PC-9 (cell line): ENCODE measurements at regions of chr12 and their contacts with region 1.

Region 1: DNA sequence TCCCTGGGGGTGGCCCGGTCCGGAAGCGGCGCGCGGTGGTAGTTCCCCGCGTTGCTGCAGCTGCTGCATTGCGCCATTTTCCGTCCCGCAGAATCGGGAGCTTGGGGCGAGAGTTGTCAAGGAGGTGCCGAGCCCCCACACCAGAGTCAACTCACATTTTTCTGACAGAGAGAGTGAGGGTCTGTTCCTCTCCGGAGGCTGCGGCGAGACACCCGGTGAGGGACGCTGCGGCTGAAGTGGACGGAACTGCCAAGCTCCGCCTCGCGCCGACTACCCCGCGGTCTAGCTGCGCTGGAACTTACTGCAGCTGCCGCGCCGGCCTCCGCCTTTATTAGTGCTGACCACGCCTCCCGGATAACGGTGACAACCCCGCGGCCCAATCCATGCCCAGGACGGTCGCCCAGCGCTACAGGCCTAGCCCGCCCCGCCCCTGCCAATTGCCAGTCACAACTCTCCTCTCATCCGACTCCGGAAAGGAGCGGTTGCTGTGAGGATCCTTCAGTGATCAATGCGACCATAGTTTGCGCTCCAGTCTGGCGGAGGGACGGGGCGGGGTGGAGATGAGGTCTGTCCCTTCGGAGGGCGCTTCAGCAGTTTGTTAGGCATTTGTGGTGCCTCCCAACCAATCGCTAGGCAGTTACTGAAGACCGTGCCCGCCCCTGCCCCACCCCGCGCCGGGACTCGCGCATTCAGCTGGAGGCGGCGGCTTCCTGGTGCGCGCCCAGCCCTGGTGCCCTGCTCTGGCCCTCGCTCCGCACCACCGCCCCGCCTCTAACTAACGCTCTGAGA is at the start of gene VAMP1:
- DNase-seq: peak; percentile 93 to 98
- H3K4me3 ChIP-seq: peak within 1 kb of the TSS; percentile 76
- H3K27ac ChIP-seq: no peak within 1 kb of the TSS
- H3K4me1 ChIP-seq: peaks cover 15% of the 10 kb centered on the region
- H3K27me3 ChIP-seq: 0 out of 2 replicates have a peak, but pooled peaks cover 6% of the 10 kb centered on the region
- CTCF ChIP-seq: no peak
- total RNA-seq, gene VAMP1: 7.7 and 9.1 TPM in 2 replicates

Region 2: DNA sequence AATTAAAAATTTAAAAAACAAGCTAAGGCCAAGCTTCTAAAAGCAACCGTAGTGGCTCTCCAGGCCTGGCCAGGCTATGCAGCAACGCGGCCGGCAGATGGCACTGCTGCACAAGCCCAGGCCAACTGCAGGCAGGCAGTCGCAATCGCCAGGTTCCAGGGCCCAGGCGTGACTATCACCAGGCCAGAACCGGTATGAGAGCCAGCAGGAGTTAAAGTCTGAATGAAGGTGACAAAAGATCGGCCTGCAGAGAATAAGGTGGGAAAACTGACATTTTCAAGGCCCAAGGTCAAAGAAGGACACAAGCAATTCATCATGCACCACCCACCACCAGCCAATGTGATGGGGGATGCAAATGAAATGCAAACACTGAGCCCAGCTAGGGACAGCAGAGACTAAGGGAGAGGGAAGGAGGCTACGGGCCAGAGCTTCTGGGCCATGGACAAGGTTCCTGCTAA is 481.9 kb before region 1 on chr12:
- CTCF ChIA-PET with region 1: interaction called, 3 read pairs
- POLR2A ChIA-PET with region 1: interaction called, 5 read pairs
- intact Hi-C with region 1: loop called (anchors 2 kb)
- DNase-seq: peak; percentile 50 to 86
- H3K4me3 ChIP-seq: no peak overlapping the region
- H3K27ac ChIP-seq: no peak overlapping the region
- H3K4me1 ChIP-seq: no peaks in the 10 kb centered on the region
- H3K27me3 ChIP-seq: peaks cover 35% of the 10 kb centered on the region
- CTCF ChIP-seq: peak; percentile 99

Region 3: GRCh38 chr12:6062757-6063735 is 407.5 kb before region 1 on chr12:
- CTCF ChIA-PET with region 1: no interaction called
- POLR2A ChIA-PET with region 1: no interaction called
- intact Hi-C with region 1: loop called (anchors 2 kb)
- DNase-seq: peak; percentile 48 to 80
- H3K4me3 ChIP-seq: no peak overlapping the region
- H3K27ac ChIP-seq: no peak overlapping the region
- H3K4me1 ChIP-seq: peaks cover 34% of the 10 kb centered on the region
- H3K27me3 ChIP-seq: no peaks in the 10 kb centered on the region
- CTCF ChIP-seq: peak; percentile 98

Region 4: GRCh38 chr12:6215932-6216494 is 254.6 kb before region 1 on chr12:
- CTCF ChIA-PET with region 1: no interaction called
- POLR2A ChIA-PET with region 1: no interaction called
- intact Hi-C with region 1: loop called (anchors 2 kb)
- DNase-seq: peak; percentile 99 to 100
- H3K4me3 ChIP-seq: peak overlapping the region; percentile 32; the same call in 1 of the 2 replicates
- H3K27ac ChIP-seq: peak overlapping the region; percentile 95
- H3K4me1 ChIP-seq: peaks cover 86% of the 10 kb centered on the region
- H3K27me3 ChIP-seq: no peaks in the 10 kb centered on the region
- CTCF ChIP-seq: no peak

Region 5: DNA sequence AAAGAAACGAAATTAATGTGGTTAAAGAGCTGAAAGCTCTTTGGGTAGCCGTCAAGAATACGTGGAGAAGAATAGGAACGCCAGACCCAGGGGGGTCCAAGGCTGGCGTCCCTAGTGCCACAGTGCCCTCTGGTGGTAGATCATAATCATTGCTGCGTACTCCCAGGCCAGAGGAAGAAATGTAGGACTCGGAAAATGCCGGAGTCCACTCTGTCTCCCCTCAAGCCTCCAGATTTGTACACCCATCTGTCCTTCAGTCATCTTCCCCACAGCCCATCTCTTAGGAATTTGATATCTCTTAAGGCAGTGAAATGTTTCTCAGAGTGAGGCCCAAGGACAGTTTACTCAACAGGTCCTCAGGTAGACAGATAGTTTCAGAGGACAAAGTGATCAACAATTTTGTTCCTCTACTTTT is 185.5 kb before region 1 on chr12:
- CTCF ChIA-PET with region 1: interaction called, 4 read pairs
- POLR2A ChIA-PET with region 1: interaction called, 3 read pairs
- intact Hi-C with region 1: loop called (anchors 2 kb)
- DNase-seq: peak; percentile 48 to 79
- H3K4me3 ChIP-seq: no peak overlapping the region
- H3K27ac ChIP-seq: no peak overlapping the region
- H3K4me1 ChIP-seq: peaks cover 40% of the 10 kb centered on the region
- H3K27me3 ChIP-seq: no peaks in the 10 kb centered on the region
- CTCF ChIP-seq: peak; percentile 99

Region 6: GRCh38 chr12:6335451-6336078 is 135.0 kb before region 1 on chr12:
- CTCF ChIA-PET with region 1: interaction called, 3 read pairs
- POLR2A ChIA-PET with region 1: interaction called, 3 read pairs
- intact Hi-C with region 1: loop called (anchors 1 kb)
- DNase-seq: peak; percentile 76
- H3K4me3 ChIP-seq: peak overlapping the region; percentile 49
- H3K27ac ChIP-seq: peak overlapping the region; percentile 95
- H3K4me1 ChIP-seq: peaks cover 82% of the 10 kb centered on the region
- H3K27me3 ChIP-seq: no peaks in the 10 kb centered on the region
- CTCF ChIP-seq: peak; percentile 53; the same call in 1 of the 2 replicates

Region 7: DNA sequence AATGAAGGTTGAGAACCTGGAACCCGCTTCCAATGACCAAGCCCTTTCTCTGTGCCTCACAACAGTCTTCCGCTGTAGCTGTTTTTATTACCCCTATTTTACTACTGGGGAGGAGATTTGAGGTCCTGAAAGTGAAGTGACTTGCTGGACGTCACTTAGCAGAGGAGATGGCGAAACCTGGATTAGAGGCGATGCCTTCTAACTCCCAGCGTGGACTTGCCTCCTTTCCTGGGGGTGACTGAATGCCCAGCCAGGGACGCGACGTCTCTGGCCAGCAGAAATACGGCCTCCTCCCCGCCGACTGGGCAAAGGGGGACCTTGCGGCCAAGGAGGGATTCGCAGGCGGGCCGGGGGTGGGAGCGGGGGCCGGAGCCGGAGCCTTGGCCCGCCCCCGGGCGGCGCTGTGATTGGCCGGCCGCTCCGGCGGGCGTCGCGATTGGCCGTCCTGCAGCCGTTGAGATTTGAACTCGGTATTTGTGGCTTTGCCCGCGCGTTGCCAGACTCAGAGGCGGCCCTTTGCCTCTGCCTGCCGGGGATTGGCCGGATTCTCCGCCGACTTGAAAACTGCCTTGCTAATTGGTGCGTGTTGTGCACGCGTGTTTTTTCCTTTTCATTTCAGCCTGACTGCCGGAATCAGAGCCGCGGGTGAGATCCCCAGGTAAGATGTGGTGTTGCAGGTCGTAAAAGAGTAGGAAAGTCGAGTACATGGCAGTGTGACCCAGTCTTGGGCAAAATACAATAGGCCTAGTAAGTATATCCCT is 23.1 kb after region 1 on chr12 and contains the start of gene NCAPD2:
- CTCF ChIA-PET with region 1: interaction called, 3 read pairs
- POLR2A ChIA-PET with region 1: interaction called, 9 read pairs
- intact Hi-C with region 1: loop called (anchors 1 kb)
- DNase-seq: peak; percentile 93 to 98
- H3K4me3 ChIP-seq: peak within 1 kb of the TSS; percentile 87
- H3K27ac ChIP-seq: peak within 1 kb of the TSS; percentile 85
- H3K4me1 ChIP-seq: peaks cover 24% of the 10 kb centered on the region
- H3K27me3 ChIP-seq: no peaks in the 10 kb centered on the region
- CTCF ChIP-seq: peak; percentile 46; the same call in 1 of the 2 replicates
- total RNA-seq, gene NCAPD2: 220 and 266 TPM in 2 replicates

Region 8: GRCh38 chr12:6507102-6507998 is 36.8 kb after region 1 on chr12:
- CTCF ChIA-PET with region 1: no interaction called
- POLR2A ChIA-PET with region 1: no interaction called
- intact Hi-C with region 1: no loop called
- DNase-seq: no peak
- H3K4me3 ChIP-seq: no peak overlapping the region
- H3K27ac ChIP-seq: no peak overlapping the region
- H3K4me1 ChIP-seq: no peaks in the 10 kb centered on the region
- H3K27me3 ChIP-seq: no peaks in the 10 kb centered on the region
- CTCF ChIP-seq: no peak